ENCODE measurements at regions of chr1 and their contacts with region 1.

Region 1: GRCh38 chr1:233668725-233669294 is 54.9 kb downstream of the KCNK1 start:
- DNase-seq: no peak
- ATAC-seq: peak; percentile 81

Region 2: GRCh38 chr1:233721141-233721547 is 52.3 kb after region 1 on chr1:
- intact Hi-C with region 1: loop called (anchors 10 kb)
- DNase-seq: no peak
- ATAC-seq: peak; percentile 30